ENCODE measurements at regions of chr15 and their contacts with region 1.

Region 1: DNA sequence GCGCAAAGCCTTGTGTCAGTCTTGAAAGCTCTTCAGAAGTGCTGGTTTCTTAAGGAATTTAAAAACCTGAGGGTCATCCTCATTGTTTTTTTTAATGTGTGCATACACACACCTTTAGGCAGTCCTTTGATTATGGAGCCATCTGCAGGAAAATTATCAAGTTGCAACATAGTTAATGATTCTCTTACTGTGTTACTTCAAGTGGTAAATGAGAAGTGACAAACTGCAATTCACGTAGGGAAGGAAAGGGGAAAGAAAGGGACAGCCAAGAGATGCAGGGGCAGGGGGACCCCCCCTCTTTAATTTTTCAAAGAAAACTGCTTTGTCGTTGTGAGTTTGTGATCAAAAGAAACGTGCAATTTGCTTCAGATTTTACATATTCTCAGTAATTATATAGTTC is 162.4 kb upstream of the CGNL1 start:
- DNase-seq: no peak
- H3K4me3 ChIP-seq: no peak overlapping the region
- CTCF ChIP-seq: peak; percentile 12

Region 2: DNA sequence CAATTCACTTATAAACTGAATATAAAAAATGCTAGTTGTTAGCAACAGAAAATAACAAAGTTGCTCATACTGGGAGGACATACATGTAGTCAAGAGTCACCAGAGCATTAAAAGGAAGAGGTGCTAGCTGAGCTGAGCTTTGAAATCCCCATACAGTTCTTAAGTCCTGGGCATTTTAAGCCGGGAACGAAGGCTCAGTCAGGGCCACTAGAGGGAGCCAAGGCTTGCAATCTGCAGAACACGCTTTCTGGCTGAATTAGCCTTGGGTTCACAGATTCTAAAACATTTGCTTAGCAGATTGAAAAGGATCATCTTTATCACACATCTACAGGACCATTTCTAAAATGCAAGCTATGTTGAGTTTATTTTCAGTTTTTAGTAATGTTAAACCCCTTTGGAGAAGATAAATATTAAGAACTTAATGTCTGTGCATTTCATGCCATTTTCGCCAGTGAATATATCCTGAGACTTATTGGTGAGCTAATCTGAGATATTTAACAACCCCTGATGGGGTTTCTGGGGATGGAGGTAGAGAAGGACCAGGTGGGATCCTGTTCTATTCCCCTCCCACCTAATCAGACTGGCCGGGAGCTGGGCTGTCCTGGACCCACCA is 722.6 kb before region 1 on chr15:
- CTCF ChIA-PET with region 1: interaction called, 10 read pairs
- POLR2A ChIA-PET with region 1: no interaction called
- DNase-seq: peak; percentile 36
- H3K4me3 ChIP-seq: no peak overlapping the region
- CTCF ChIP-seq: peak; percentile 91

Region 3: DNA sequence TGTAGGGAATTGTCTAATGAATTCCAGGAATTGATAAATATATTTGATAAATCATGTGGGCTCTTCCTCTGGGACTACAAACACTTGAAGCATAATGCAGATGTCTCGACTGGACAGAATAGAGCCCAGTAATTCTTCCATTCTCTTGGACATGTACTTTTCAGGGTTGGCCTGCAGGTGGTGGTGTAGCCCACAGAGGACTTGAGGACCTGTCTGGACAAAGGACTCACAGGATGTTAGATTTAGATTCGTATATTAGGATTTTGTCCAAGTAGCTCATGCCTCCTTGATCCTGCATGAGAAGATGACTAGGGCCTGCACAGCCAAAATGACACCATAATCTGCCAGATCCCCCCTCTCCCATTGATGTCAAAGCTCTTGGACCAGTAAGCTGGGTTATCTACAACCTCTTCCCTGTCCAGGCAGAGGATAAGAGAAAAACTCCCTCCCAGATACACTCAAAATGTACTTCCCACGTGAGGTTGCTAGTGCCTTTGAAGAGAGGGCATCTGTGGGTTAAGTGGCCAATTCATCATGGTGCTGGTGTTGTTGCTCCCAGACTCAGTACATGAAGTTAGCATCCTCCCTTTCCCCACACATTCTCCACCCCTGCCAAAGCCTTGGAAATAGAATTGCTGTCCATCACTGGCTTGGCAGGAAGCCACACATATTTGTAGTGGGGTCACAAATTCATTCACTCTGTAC is 392.0 kb before region 1 on chr15:
- CTCF ChIA-PET with region 1: interaction called, 10 read pairs
- POLR2A ChIA-PET with region 1: no interaction called
- DNase-seq: peak; percentile 26
- H3K4me3 ChIP-seq: no peak overlapping the region
- CTCF ChIP-seq: peak; percentile 70

Region 4: GRCh38 chr15:57138349-57138788 is 75.5 kb before region 1 on chr15:
- CTCF ChIA-PET with region 1: interaction called, 16 read pairs
- POLR2A ChIA-PET with region 1: no interaction called
- DNase-seq: no peak
- H3K4me3 ChIP-seq: no peak overlapping the region
- CTCF ChIP-seq: peak; percentile 68

Region 5: GRCh38 chr15:57158589-57158988 is 55.3 kb before region 1 on chr15:
- CTCF ChIA-PET with region 1: interaction called, 25 read pairs
- POLR2A ChIA-PET with region 1: no interaction called
- DNase-seq: no peak
- H3K4me3 ChIP-seq: no peak overlapping the region
- CTCF ChIP-seq: no peak

Region 6: DNA sequence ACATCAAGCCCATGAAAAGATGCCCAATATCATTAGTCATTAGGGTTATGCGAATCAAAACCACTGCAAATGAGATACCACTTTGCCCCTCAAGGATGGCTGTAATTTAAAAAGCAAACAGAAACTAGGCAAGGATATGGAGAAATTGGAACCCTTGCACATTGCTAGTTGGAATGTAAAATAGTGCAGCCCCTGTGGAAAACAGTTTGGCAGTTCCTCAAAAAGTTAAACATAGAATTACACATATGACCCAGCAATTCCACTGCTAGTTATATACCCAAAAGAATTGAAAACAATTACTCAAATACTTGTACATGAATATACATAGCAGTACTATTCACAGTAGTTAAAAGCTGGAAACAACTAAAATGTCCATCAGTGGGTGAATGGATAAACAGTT is 24.4 kb before region 1 on chr15:
- CTCF ChIA-PET with region 1: interaction called, 10 read pairs
- POLR2A ChIA-PET with region 1: no interaction called
- DNase-seq: no peak
- H3K4me3 ChIP-seq: no peak overlapping the region
- CTCF ChIP-seq: no peak

Region 7: GRCh38 chr15:57201578-57201977 is 12.3 kb before region 1 on chr15:
- CTCF ChIA-PET with region 1: interaction called, 16 read pairs
- POLR2A ChIA-PET with region 1: no interaction called
- DNase-seq: no peak
- H3K4me3 ChIP-seq: no peak overlapping the region
- CTCF ChIP-seq: no peak

Region 8: GRCh38 chr15:57281321-57281720 is 67.5 kb after region 1 on chr15:
- CTCF ChIA-PET with region 1: no interaction called
- POLR2A ChIA-PET with region 1: no interaction called
- DNase-seq: no peak
- H3K4me3 ChIP-seq: no peak overlapping the region
- CTCF ChIP-seq: no peak

Measured in AG04449 (cell line).